Breast epithelium (tissue), 4 donors: ENCODE measurements at regions of chr1 and their contacts with region 1.

Region 1: GRCh38 chr1:88979054-88979748 is 13.2 kb downstream of the KYAT3 start:
- DNase-seq: no peak
- H3K4me3 ChIP-seq: no peak overlapping the region
- H3K27ac ChIP-seq: no peak overlapping the region
- H3K4me1 ChIP-seq: no peaks in the 10 kb centered on the region
- H3K27me3 ChIP-seq: no peaks in the 10 kb centered on the region
- CTCF ChIP-seq: no peak
- POLR2A ChIP-seq: no peak

Region 2: GRCh38 chr1:89877756-89878155 is 898.6 kb after region 1 on chr1:
- intact Hi-C with region 1: loop called (anchors 5 kb)
- DNase-seq: no peak
- H3K4me3 ChIP-seq: no peak overlapping the region
- H3K27ac ChIP-seq: no peak overlapping the region
- H3K4me1 ChIP-seq: no peaks in the 10 kb centered on the region
- H3K27me3 ChIP-seq: no peaks in the 10 kb centered on the region
- CTCF ChIP-seq: no peak
- POLR2A ChIP-seq: no peak